Activated naive CD4-positive, alpha-beta T cell treated with anti-CD3 and anti-CD28 coated beads for 36 hours (primary cell): ENCODE measurements at regions of chr11 and their contacts with region 1.

Region 1: DNA sequence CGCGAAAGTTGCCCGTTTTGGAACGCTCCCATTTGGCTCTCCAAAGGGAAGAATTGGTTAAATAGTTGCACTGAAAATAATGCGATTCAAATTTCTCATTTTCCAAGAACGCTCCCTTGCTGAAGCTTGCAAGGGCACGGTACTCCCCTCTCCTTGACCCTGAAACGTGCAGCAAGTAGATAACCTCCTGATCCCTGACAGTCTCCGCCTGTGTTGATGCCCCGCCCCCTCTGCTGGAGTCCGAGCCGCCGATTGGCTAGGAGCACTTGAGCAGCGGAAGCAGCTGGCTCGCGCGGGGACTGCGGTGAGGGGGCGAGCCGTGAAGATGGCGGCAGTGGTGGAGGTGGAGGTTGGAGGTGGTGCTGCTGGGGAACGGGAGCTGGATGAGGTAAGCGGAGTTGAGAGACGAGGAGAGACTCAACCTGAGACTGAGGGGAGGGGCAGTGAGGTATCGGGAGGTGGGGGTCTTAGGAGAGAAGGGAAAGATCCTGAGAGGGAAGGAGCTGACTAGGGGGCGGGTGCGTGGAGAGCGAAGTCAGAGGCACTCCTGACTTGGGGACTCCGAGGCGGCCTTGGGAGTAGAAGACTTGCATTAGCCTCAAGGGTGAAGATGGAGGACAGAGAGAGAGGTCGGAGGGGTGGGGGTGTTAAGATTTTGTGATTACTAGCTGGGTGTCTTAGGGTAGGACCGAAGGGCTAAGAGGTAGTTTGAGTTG is at the start of gene RNF121:
- DNase-seq: peak; percentile 99
- H3K4me3 Mint-ChIP-seq: peak within 1 kb of the TSS; percentile 96
- H3K27ac Mint-ChIP-seq: peak within 1 kb of the TSS; percentile 100
- H3K4me1 Mint-ChIP-seq: peaks cover 51% of the 10 kb centered on the region
- H3K27me3 Mint-ChIP-seq: no peaks in the 10 kb centered on the region
- total RNA-seq, gene RNF121: 15.4 to 16.8 TPM

Region 2: DNA sequence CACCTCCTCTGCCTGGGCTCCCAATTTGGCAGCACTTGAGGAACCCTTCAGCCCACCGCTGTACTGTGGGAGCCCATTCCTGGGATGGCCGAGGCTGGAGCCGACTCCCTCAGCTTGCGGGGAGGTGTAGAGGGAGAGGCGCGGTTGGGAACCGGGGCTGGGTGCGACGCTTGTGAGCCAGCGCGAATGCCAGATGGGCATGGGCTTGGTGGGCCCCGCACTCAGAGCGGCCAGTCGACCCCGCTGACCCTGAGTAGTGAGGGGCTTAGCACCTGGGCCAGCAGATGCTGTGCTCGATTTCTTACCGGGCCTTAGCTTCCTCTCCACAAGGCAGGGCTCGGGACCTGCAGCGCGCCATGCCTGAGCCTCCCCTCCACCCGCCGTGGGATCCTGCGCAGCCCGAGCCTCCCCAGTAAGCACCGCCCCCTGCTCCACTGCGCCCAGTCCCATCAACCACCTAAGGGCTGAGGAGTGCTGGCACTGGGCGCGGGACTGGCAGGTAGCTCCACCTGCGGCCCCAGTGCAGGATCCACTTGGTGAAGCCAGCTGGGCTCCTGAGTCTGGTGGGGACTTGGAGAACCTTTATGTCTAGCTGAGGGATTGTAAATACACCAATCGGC is 154.2 kb before region 1 on chr11:
- CTCF ChIA-PET with region 1: no interaction called
- intact Hi-C with region 1: no loop called
- DNase-seq: no peak
- H3K4me3 Mint-ChIP-seq: no peak overlapping the region
- H3K27ac Mint-ChIP-seq: no peak overlapping the region
- H3K4me1 Mint-ChIP-seq: no peaks in the 10 kb centered on the region
- H3K27me3 Mint-ChIP-seq: no peaks in the 10 kb centered on the region

Region 3: DNA sequence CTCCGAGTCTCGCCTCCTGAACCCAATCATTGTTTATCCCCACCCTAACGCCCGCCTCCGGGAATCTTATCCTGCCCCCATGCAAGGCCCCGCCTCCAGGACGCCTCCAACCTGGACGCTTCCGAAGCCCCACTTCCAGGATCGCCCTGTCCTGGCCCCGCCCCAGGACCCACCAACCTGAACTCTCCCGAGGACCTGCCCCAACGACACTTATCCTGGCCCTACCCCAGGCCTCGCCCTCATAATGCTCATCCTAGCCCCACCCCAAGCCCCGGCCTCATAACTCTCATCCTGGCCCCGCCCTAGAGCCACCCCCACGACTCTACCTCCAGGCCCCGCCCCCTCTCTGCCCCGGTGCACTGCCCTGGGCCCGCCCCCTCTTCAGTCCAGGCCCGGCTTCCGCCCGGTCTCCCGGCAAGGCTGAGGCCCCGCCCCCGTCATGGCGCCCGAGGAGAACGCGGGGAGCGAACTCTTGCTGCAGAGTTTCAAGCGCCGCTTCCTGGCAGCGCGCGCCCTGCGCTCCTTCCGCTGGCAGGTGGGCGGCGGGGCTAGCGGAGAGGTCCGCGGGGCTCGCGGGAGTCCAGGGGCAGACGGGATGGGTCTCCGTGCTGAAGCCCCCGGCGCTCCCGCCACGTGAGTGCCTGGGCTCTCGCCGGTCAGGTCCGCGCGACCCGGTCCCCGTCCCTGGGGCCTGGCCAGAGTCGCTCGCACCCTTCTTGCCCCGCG is 141.6 kb before region 1 on chr11:
- CTCF ChIA-PET with region 1: no interaction called
- intact Hi-C with region 1: loop called (anchors 1 kb)
- DNase-seq: peak; percentile 97
- H3K4me3 Mint-ChIP-seq: peak overlapping the region; percentile 95
- H3K27ac Mint-ChIP-seq: peak overlapping the region; percentile 96
- H3K4me1 Mint-ChIP-seq: peaks cover 22% of the 10 kb centered on the region
- H3K27me3 Mint-ChIP-seq: no peaks in the 10 kb centered on the region

Region 4: DNA sequence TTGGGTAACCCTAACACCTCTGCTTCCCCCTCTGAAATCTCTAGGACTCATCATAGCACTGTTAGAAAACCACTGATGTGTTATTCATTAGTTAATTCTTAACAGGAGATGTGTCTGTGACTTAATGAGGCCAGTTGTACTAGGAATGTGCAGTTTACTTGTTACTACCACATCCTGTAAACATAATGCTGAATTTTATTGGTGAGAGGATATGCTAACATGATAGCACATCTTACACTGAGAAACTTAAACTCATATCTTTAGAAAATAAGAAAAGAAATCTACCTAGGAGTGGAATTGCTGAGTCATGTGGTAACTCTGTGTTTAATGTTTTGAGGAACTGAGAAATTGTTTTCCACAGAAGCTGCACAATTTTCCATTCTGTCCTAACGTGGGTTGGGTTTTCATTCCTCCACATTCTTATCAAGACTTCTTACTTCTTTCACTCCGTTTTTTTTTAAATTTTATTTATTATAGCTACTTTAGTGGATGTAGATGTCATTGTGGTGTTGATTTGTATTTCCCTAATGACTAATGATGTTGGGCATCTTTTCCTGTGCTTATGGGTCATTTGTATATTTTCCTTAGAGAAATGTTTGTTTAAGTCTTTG is 33.6 kb after region 1 on chr11:
- CTCF ChIA-PET with region 1: no interaction called
- intact Hi-C with region 1: loop called (anchors 2 kb)
- DNase-seq: no peak
- H3K4me3 Mint-ChIP-seq: no peak overlapping the region
- H3K27ac Mint-ChIP-seq: peak overlapping the region; percentile 66
- H3K4me1 Mint-ChIP-seq: peaks cover 18% of the 10 kb centered on the region
- H3K27me3 Mint-ChIP-seq: no peaks in the 10 kb centered on the region

Region 5: GRCh38 chr11:72040726-72041441 is 112.0 kb after region 1 on chr11:
- CTCF ChIA-PET with region 1: no interaction called
- intact Hi-C with region 1: loop called (anchors 1 kb)
- DNase-seq: peak; percentile 85
- H3K4me3 Mint-ChIP-seq: no peak overlapping the region
- H3K27ac Mint-ChIP-seq: no peak overlapping the region
- H3K4me1 Mint-ChIP-seq: peaks cover 44% of the 10 kb centered on the region
- H3K27me3 Mint-ChIP-seq: no peaks in the 10 kb centered on the region

Region 6: GRCh38 chr11:72102946-72103753 is 174.3 kb after region 1 on chr11 and contains the start of gene LAMTOR1:
- CTCF ChIA-PET with region 1: interaction called, 3 read pairs
- intact Hi-C with region 1: loop called (anchors 2 kb)
- DNase-seq: peak; percentile 100
- H3K4me3 Mint-ChIP-seq: peak within 1 kb of the TSS; percentile 87
- H3K27ac Mint-ChIP-seq: peak within 1 kb of the TSS; percentile 77
- H3K4me1 Mint-ChIP-seq: peaks cover 36% of the 10 kb centered on the region
- H3K27me3 Mint-ChIP-seq: no peaks in the 10 kb centered on the region
- total RNA-seq, gene LAMTOR1: 39.1 to 41.8 TPM

Region 7: DNA sequence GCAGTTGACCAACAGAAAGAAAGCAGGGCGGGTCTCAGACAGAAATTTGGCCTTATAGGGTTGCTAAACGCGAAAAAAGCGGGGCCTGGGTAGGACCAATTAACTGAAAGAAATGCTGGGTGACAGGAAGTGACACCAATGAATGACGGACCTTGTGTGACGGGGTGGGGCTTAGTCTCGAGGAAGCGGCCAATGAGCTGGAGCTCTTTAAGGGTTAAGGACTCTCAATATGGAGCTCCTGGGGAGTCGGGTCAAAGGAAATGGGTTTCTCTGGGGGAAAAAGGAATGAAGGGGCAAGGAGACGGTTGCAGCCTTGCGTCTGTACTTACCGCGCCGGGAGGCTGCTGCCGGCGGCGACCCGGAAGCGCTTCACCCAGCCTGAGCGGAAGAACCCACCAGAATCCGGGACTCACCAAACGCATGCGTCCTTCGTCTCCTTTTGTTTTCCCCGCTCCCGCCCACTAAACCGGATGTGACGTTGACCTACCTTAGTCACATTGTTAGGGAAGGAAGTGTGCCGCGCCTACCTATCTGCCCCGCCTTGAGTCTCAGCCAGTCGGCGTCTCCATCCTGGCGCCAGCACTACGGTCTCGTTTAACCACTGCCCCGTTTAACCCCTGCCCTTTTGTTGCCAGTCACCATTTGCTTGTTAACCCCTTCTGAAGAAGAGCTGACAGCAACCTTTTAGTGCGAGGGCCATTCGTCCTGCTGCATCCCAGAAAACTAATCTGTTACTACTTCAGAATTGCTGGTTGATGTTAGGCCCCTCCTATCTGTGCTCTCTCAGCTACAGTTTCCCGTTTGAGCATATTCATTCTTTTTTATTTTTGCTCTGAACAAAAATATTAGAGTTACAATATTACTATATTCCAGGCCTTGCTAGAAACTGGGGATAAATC is 183.7 kb after region 1 on chr11 and contains the start of gene ANAPC15:
- CTCF ChIA-PET with region 1: no interaction called
- intact Hi-C with region 1: loop called (anchors 1 kb)
- DNase-seq: peak; percentile 100
- H3K4me3 Mint-ChIP-seq: peak within 1 kb of the TSS; percentile 85
- H3K27ac Mint-ChIP-seq: peak within 1 kb of the TSS; percentile 97
- H3K4me1 Mint-ChIP-seq: peaks cover 12% of the 10 kb centered on the region
- H3K27me3 Mint-ChIP-seq: no peaks in the 10 kb centered on the region
- total RNA-seq, gene ANAPC15: 69.1 to 70.3 TPM